Dendritic cell treated with granulocyte-macrophage colony-stimulating factor and Interleukin-4, amounts not matched to agents 40 ng/mL and 50 ng/mL, for 4 days (primary cell): ENCODE measurements at regions of chr13 and their contacts with region 1.

Region 1: GRCh38 chr13:40777166-40777808 is 6.3 kb upstream of the MRPS31 start:
- H3K4me3 Mint-ChIP-seq: peak overlapping the region; percentile 39
- H3K27ac Mint-ChIP-seq: peak overlapping the region; percentile 15
- H3K4me1 Mint-ChIP-seq: peaks cover 40% of the 10 kb centered on the region
- H3K27me3 Mint-ChIP-seq: no peaks in the 10 kb centered on the region

Region 2: GRCh38 chr13:40485611-40486517 is 291.4 kb before region 1 on chr13:
- intact Hi-C with region 1: no loop called
- H3K4me3 Mint-ChIP-seq: no peak overlapping the region
- H3K27ac Mint-ChIP-seq: no peak overlapping the region
- H3K4me1 Mint-ChIP-seq: peaks cover 6% of the 10 kb centered on the region
- H3K27me3 Mint-ChIP-seq: peaks cover 25% of the 10 kb centered on the region

Region 3: DNA sequence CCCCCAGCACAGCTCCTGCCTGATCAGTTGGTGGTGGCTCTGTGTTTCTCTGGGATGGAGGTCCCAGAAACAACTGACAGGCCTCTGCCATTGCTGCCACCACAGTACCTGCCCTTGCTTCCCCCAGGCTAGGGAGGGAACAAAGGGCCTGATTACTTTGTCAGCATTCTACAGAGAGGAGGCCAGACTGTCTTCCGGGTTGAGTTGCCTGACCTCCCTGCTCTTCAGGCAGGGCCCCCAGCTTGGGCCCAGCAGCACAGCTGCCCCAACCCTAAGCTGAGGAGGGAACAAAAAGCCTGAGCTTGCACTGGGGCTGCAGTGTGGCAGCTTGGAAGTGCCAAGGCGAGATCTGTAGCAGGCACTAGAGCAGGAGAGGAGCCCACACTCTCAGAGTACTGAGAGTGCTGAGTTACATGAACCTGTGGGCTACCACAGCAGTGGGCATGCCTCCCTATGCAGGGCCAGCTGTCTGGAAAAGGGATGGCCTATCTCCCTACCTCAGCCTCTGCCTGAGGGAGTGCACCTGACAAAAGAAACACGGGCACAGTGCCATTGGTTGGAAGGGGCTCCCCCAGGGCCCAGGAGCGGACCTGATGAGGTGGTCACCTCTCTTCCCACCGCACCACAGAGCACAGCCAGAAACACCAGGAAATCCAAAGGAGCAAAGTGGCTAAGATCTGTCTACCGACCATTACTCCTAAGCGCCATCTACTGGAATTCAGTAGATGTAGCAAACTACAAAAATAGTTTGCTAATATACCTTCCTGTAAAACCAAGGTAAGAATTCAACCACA is 36.6 kb after region 1 on chr13:
- intact Hi-C with region 1: loop called (anchors 2 kb)
- H3K4me3 Mint-ChIP-seq: no peak overlapping the region
- H3K27ac Mint-ChIP-seq: no peak overlapping the region
- H3K4me1 Mint-ChIP-seq: peaks cover 22% of the 10 kb centered on the region
- H3K27me3 Mint-ChIP-seq: no peaks in the 10 kb centered on the region

Region 4: DNA sequence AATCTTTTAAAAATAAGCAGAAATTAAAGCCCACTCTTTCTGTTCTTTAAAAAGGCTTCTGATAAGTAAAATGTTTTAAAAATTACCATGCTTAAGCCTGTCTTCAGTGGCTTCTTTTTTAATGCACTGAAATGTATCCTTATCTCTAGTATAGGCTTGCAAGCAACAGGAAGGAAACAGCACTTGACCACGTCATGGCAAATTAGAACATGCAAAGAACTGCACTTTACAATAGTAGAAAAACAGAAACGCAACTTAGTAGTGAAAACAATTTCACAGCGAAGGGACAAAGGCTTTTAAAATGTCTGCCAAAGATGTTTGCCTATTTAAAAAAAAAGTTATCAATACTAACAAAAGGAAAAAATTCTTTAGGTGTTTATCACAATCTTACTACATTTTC is 205.5 kb after region 1 on chr13:
- intact Hi-C with region 1: no loop called
- H3K4me3 Mint-ChIP-seq: no peak overlapping the region
- H3K27ac Mint-ChIP-seq: peak overlapping the region; percentile 89
- H3K4me1 Mint-ChIP-seq: peaks cover 58% of the 10 kb centered on the region
- H3K27me3 Mint-ChIP-seq: no peaks in the 10 kb centered on the region

Region 5: DNA sequence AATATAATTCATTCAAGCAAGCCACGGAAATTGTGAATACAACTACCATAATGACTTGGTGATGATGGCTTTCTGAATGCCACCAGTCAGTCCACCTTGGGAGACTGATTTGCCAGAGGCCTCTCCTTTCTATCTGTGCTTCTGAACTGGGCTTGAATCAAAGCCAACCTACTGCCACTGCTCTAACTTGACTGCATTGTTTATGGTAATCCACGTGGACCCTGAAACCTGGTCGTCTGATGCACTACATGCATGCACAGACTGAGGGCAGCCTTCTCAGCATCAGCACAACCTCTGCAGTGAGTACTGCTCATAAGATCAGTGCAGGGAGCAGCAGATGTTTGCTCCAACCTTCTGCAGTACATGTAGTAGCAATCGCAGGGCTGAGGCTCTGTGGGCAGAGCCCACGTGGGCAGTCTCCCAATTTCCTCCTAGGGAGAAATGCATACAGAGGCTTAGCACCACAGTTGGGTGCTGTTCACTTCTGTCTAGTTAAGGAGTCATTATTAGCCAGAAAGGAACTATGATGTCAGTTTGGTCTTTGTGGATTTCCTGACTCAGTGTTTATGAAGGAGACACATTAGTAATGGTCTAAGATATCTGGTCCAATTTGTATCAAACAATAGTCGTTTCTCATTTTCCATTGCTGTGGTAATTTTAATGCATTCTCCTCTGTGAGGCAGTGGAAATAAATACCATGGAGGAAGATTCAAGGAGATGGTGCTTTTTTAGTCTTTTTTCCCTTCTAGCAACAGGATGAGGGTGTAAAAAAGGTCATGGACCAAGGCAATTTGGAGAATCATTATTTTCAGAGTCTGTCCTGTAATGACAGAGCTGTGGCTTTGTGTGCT is 1577.2 kb after region 1 on chr13:
- intact Hi-C with region 1: no loop called
- H3K4me3 Mint-ChIP-seq: no peak overlapping the region
- H3K27ac Mint-ChIP-seq: peak overlapping the region; percentile 51
- H3K4me1 Mint-ChIP-seq: peaks cover 12% of the 10 kb centered on the region
- H3K27me3 Mint-ChIP-seq: no peaks in the 10 kb centered on the region